PC-3 (cell line): ENCODE measurements at regions of chr10 and their contacts with region 1.

Region 1: DNA sequence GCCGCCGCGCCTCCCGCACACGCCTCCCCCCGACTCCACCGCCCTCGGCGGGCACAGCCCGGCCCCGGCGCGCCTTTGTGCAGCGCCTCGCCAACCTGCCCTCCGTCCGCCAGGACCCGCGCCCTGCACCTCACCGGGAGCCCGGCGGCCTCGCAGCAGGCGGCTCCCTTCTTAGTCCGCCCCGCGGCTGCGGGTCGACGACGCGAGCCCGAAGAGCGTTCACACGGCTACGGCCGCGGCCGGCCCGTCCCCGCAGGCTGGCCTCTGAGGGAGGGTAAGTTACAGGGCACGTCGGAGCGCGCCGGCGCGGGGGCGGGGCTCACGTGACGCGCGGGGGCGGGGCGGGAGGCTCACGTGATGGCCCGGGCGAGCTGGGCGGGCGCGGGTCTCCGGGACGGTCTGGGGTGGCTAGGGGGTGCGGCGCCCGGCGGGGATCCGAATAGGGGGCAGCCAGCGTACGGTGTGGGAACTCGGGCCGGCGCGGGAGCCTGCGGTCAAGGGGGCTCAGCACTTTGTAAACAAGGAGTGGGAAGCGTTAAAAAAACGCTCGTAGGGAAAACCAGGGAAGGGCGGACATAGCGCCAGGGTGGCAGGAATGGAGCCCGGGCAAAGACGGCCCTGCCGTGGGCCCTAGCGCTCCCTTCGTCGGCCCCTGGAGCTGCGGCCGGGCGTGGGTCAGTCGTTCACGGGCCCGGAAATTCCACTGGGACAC is at the start of gene ARHGAP12:
- DNase-seq: peak; percentile 71
- ATAC-seq: peak; percentile 74
- H3K4me3 ChIP-seq: peak within 1 kb of the TSS; percentile 85
- H3K27ac ChIP-seq: peak within 1 kb of the TSS; percentile 43
- H3K4me1 ChIP-seq: peaks cover 22% of the 10 kb centered on the region
- H3K27me3 ChIP-seq: no peaks in the 10 kb centered on the region
- CTCF ChIP-seq: no peak
- total RNA-seq, gene ARHGAP12: 13.6 and 16.6 TPM in 2 replicates

Region 2: DNA sequence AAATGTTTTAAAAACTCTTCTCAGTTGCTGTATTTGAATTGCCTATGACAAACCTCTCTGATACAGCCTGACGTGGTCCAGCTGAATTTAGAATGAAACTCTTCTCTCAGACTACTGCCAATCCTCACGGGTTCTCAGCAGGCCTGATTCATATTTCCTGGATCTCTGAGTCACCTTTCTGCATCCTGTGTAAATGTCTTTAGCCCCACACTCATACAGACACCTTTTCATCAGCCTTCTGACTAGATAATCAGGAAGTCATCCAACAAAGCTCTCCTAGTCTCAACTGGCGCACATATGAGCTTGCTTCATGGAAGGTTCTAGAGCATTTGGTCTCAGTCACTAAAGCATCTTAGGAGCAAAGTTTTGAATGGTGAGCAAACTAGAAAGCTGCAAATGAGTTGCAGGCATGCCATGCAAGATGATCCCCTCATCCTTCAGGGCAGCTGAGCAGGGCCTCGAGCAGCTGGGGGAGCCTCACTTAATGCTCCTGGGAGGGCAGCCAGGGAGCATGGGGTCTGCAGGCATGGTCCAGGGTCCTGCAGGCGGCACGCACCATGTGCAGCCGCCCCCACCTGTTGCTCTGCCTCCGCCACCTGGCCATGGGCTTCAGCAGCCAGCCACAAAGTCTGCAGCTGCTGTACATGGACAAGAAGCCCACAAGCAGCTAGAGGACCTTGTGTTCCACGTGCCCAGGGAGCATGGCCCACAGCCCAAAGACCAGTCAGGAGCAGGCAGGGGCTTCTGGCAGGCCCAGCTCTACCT is 182.9 kb before region 1 on chr10:
- CTCF ChIA-PET with region 1: interaction called, 11 read pairs
- POLR2A ChIA-PET with region 1: no interaction called
- intact Hi-C with region 1: no loop called
- DNase-seq: peak; percentile 91
- ATAC-seq: peak; percentile 99
- H3K4me3 ChIP-seq: no peak overlapping the region
- H3K27ac ChIP-seq: peak overlapping the region; percentile 96
- H3K4me1 ChIP-seq: peaks cover 19% of the 10 kb centered on the region
- H3K27me3 ChIP-seq: no peaks in the 10 kb centered on the region
- CTCF ChIP-seq: no peak

Region 3: GRCh38 chr10:31851216-31851615 is 77.5 kb before region 1 on chr10:
- CTCF ChIA-PET with region 1: no interaction called
- POLR2A ChIA-PET with region 1: no interaction called
- intact Hi-C with region 1: no loop called
- DNase-seq: no peak
- ATAC-seq: no peak
- H3K4me3 ChIP-seq: no peak overlapping the region
- H3K27ac ChIP-seq: no peak overlapping the region
- H3K4me1 ChIP-seq: no peaks in the 10 kb centered on the region
- H3K27me3 ChIP-seq: no peaks in the 10 kb centered on the region
- CTCF ChIP-seq: no peak

Region 4: GRCh38 chr10:31940839-31941653 is 12.3 kb after region 1 on chr10:
- CTCF ChIA-PET with region 1: interaction called, 5 read pairs
- POLR2A ChIA-PET with region 1: interaction called, 8 read pairs
- intact Hi-C with region 1: loop called (anchors 2 kb)
- DNase-seq: peak; percentile 98
- ATAC-seq: peak; percentile 79
- H3K4me3 ChIP-seq: peak overlapping the region; percentile 29; the same call in 1 of the 2 replicates
- H3K27ac ChIP-seq: peak overlapping the region; percentile 94
- H3K4me1 ChIP-seq: peaks cover 76% of the 10 kb centered on the region
- H3K27me3 ChIP-seq: no peaks in the 10 kb centered on the region
- CTCF ChIP-seq: no peak